ENCODE measurements at regions of chr10 and their contacts with region 1.

Region 1: DNA sequence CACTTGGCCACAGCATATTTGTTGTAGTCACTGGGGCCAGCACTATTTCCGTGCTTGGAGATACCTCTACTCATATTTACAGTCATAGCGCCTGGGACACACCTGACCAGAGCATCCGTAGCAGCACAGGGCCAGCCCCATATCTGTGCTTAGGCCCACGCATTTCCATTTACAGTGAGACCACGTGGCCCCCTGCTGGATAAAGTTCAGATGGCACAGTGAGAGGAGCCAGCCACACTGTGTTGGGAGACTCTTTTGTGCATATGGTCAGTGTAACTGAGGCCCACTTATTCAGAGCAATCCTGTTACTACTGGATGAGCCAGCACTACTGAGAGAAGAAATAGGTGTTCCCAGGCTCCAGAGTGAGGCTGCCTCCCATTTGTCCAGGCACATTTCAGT is 455.3 kb downstream of the REEP3 start:
- DNase-seq: peak; percentile 9
- H3K4me3 ChIP-seq: no peak overlapping the region
- H3K27ac ChIP-seq: no peak overlapping the region
- H3K4me1 ChIP-seq: no peaks in the 10 kb centered on the region
- H3K27me3 ChIP-seq: no peaks in the 10 kb centered on the region
- CTCF ChIP-seq: peak; percentile 58 to 64

Region 2: GRCh38 chr10:63866075-63866746 is 110.3 kb before region 1 on chr10:
- CTCF ChIA-PET with region 1: interaction called, 12 read pairs
- dilution Hi-C with region 1: no loop called
- in situ Hi-C with region 1: no loop called
- intact Hi-C with region 1: loop called (anchors 1 kb)
- DNase-seq: peak; percentile 25
- H3K4me3 ChIP-seq: no peak overlapping the region
- H3K27ac ChIP-seq: no peak overlapping the region
- H3K4me1 ChIP-seq: peaks cover 7% of the 10 kb centered on the region
- H3K27me3 ChIP-seq: peaks cover 6% of the 10 kb centered on the region
- CTCF ChIP-seq: peak; percentile 84 to 88

Region 3: GRCh38 chr10:63929826-63930467 is 46.6 kb before region 1 on chr10:
- CTCF ChIA-PET with region 1: no interaction called
- dilution Hi-C with region 1: loop called (anchors 5 kb)
- in situ Hi-C with region 1: no loop called
- intact Hi-C with region 1: no loop called
- DNase-seq: no peak
- H3K4me3 ChIP-seq: no peak overlapping the region
- H3K27ac ChIP-seq: no peak overlapping the region
- H3K4me1 ChIP-seq: no peaks in the 10 kb centered on the region
- H3K27me3 ChIP-seq: no peaks in the 10 kb centered on the region
- CTCF ChIP-seq: no peak

Region 4: DNA sequence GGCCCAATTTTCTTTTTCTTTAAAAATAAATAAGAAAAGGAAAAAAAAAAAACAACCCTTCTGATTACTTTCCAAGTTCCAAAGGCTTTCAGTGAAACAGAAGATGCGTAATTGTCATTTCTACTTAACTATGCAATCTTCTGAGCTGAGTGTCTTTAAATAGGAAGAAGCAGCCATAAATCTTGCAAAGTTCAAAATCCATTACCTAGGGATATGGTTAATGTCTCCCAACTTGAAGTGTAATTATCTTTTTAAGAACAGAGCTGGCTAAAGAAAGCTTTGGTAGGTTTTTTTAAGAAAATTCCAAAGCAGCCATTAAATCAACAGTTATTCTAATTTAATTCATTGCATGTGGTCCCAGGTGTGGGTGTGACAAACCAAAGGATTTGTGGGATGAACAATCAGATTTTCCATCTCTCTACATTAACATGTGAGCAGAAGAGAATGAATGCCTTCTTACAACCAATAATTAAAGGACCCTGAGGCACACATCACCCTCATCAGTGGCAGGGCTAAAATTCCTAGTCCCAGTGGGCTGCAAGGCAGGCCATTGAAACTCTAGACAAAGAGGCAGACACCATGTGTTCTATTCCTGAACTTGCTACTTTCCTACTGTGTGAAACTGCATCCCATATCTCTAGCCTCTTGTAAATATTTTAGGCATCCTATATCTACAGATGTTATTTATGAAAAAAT is 36.1 kb before region 1 on chr10:
- CTCF ChIA-PET with region 1: no interaction called
- dilution Hi-C with region 1: no loop called
- in situ Hi-C with region 1: no loop called
- intact Hi-C with region 1: no loop called
- DNase-seq: no peak
- H3K4me3 ChIP-seq: no peak overlapping the region
- H3K27ac ChIP-seq: no peak overlapping the region
- H3K4me1 ChIP-seq: no peaks in the 10 kb centered on the region
- H3K27me3 ChIP-seq: no peaks in the 10 kb centered on the region
- CTCF ChIP-seq: no peak

Measured in mammary epithelial cell (primary cell).